ENCODE measurements at regions of chr4 and their contacts with region 1.

Region 1: GRCh38 chr4:158253350-158253980 is 43.2 kb downstream of the TMEM144 start:
- DNase-seq: no peak
- ATAC-seq: peak; percentile 64

Region 2: GRCh38 chr4:157992038-157992705 is 261.3 kb before region 1 on chr4:
- intact Hi-C with region 1: loop called (anchors 2 kb)
- DNase-seq: no peak
- ATAC-seq: peak; percentile 80

Region 3: DNA sequence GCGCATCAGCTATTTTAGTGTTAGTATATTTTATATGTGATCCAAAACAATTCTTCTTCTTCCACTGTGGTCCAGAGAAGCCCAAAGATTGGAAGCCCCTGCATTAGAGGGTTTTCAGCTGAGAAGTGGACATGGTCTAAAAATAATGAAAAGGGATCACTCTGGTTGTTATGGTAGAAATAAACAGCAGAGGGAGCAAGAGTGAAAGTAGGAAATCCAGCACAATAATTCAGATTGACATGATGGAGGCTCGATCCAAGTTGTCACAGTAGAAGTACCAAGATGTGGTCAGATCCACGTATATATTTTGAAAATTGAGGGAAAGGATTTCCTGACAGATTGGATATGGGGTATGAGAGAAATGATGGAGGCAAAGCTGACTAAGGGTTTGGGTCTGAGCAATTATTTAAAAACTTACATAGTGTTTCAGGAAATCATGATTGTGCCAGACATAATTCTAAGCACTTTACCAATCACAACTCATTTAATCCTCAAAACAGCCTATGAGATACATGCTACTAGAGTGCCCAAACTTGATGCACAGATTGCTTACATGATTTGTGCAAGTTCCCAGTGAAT is 60.2 kb before region 1 on chr4:
- intact Hi-C with region 1: loop called (anchors 5 kb)
- DNase-seq: no peak
- ATAC-seq: no peak

Region 4: DNA sequence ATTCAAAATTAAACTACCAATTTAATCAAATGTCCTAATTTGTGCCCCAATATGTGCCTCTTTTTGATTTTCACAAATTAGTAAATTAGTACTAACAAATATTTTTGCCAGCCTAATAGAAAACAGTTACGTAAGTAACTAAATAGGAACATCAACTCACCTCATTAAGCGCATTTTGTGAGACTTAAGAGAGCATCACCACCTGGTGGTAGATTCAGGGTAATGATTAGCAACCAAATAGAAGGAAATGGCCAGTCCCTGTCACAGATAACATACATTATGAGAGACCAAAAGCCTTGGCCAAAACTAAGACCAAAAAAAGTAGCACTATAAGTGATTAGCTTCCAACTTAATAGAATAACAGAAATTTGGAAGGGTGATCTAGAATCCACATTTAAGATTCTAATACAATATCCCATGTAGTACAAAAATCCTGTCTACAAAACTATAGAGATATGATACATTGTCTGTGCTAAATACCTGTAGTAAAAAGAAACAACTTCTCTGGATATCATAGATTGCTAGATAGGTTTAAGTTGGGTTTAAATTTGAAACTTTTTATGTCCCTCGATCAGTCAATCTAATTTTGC is 371.5 kb after region 1 on chr4:
- intact Hi-C with region 1: loop called (anchors 5 kb)
- DNase-seq: no peak
- ATAC-seq: peak; percentile 59